Pancreas (tissue), 10 donors: ENCODE measurements at regions of chr2 and their contacts with region 1.

Region 1: GRCh38 chr2:187581125-187581896 is 27.1 kb upstream of the TFPI start:
- DNase-seq: peak in 1 of 6 donors; percentile 31
- ATAC-seq: peak; percentile 84 to 89 (median 87)
- H3K4me3 ChIP-seq: peak overlapping the region in 1 of 4 donors; percentile 28
- H3K27ac ChIP-seq: no peak overlapping the region
- H3K4me1 ChIP-seq: peaks cover 3 to 7% (median 5%) of the 10 kb centered on the region in 3 donors
- H3K27me3 ChIP-seq: no peaks in the 10 kb centered on the region
- CTCF ChIP-seq: peak; percentile 34 to 75 (median 54)

Region 2: DNA sequence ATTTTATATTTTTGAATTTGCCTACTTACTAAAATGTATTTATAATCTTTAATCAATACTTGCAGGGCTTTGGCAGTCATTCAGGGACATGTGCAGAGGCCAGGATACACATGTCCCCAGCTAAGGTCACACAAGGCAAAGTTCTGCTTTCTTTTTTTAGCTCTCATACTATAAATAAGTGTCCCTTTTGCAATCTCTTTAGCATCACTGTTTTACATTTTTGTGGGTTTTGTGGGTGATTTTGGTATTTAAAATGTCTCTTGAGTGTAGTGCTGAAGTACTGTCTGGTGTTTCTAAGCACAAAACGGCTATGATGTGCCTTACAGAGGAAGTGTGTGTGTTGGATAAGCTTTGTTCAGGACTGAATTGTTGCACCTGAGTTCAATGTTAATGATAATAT is 401.4 kb after region 1 on chr2:
- intact Hi-C with region 1: no loop called
- DNase-seq: peak in 4 of 6 donors; percentile 26 to 50 (median 34)
- ATAC-seq: peak; percentile 80 to 89 (median 87)
- H3K4me3 ChIP-seq: no peak overlapping the region
- H3K27ac ChIP-seq: no peak overlapping the region
- H3K4me1 ChIP-seq: peaks cover 0 to 9% (median 7%) of the 10 kb centered on the region in 3 donors
- H3K27me3 ChIP-seq: no peaks in the 10 kb centered on the region
- CTCF ChIP-seq: no peak

Region 3: DNA sequence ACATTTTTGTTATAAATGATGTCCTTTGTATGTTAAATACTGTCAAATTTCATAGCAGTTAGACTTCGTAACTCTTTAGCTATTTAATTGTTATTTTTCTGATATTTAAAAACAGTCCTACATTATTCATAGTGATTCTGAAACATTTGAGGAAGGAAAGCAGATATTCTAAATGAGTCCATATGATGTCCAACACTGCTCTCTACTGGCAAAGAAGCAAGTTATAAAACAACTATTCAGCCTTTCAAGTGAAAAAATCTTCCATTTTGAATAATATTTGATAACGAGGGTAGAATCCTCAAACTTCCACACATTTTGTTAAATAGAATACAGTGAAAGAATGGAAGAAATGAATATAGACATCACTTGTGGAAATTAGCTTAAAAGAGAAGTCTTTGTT is 931.1 kb after region 1 on chr2:
- intact Hi-C with region 1: loop called in 1 of 3 experiments (anchors 10 kb)
- DNase-seq: no peak
- ATAC-seq: peak; percentile 65 to 87 (median 84)
- H3K4me3 ChIP-seq: no peak overlapping the region
- H3K27ac ChIP-seq: no peak overlapping the region
- H3K4me1 ChIP-seq: peaks cover 0 to 21% (median 21%) of the 10 kb centered on the region in 3 donors
- H3K27me3 ChIP-seq: no peaks in the 10 kb centered on the region
- CTCF ChIP-seq: peak in 3 of 4 donors; percentile 15 to 24 (median 22)